ENCODE measurements at regions of chr12 and their contacts with region 1.

Region 1: GRCh38 chr12:7806863-7807487 is 17.8 kb downstream of the NANOG start:
- DNase-seq: peak; percentile 61
- ATAC-seq: peak; percentile 97
- H3K4me3 ChIP-seq: no peak overlapping the region
- H3K27ac ChIP-seq: no peak overlapping the region
- H3K4me1 ChIP-seq: no peaks in the 10 kb centered on the region
- H3K27me3 ChIP-seq: no peaks in the 10 kb centered on the region
- CTCF ChIP-seq: peak; percentile 78
- POLR2A ChIP-seq: no peak
- RAD21 ChIP-seq: peak; percentile 67

Region 2: GRCh38 chr12:7219599-7220243 is 587.3 kb before region 1 on chr12:
- CTCF ChIA-PET with region 1: no interaction called
- POLR2A ChIA-PET with region 1: no interaction called
- dilution Hi-C with region 1: no loop called
- in situ Hi-C with region 1: no loop called
- intact Hi-C with region 1: loop called (anchors 2 kb)
- DNase-seq: peak; percentile 73
- ATAC-seq: peak; percentile 82
- H3K4me3 ChIP-seq: no peak overlapping the region
- H3K27ac ChIP-seq: no peak overlapping the region
- H3K4me1 ChIP-seq: no peaks in the 10 kb centered on the region
- H3K27me3 ChIP-seq: peaks cover 9% of the 10 kb centered on the region
- CTCF ChIP-seq: peak; percentile 97
- POLR2A ChIP-seq: 0 out of 2 replicates have a peak, but pooled peaks have one; percentile 44
- RAD21 ChIP-seq: peak; percentile 99

Region 3: GRCh38 chr12:7645394-7646177 is 161.4 kb before region 1 on chr12:
- CTCF ChIA-PET with region 1: interaction called, 3 read pairs
- POLR2A ChIA-PET with region 1: no interaction called
- dilution Hi-C with region 1: no loop called
- in situ Hi-C with region 1: loop called (anchors 10 kb)
- intact Hi-C with region 1: loop called (anchors 1 kb)
- DNase-seq: peak; percentile 31
- ATAC-seq: peak; percentile 60; the same call in 1 of the 2 replicates
- H3K4me3 ChIP-seq: no peak overlapping the region
- H3K27ac ChIP-seq: no peak overlapping the region
- H3K4me1 ChIP-seq: no peaks in the 10 kb centered on the region
- H3K27me3 ChIP-seq: no peaks in the 10 kb centered on the region; the same call in 1 of the 2 replicates
- CTCF ChIP-seq: peak; percentile 73
- POLR2A ChIP-seq: no peak
- RAD21 ChIP-seq: peak; percentile 30

Region 4: GRCh38 chr12:7656121-7656520 is 150.9 kb before region 1 on chr12:
- CTCF ChIA-PET with region 1: no interaction called
- POLR2A ChIA-PET with region 1: no interaction called
- dilution Hi-C with region 1: no loop called
- in situ Hi-C with region 1: loop called (anchors 10 kb)
- intact Hi-C with region 1: no loop called
- DNase-seq: no peak
- ATAC-seq: no peak
- H3K4me3 ChIP-seq: no peak overlapping the region
- H3K27ac ChIP-seq: no peak overlapping the region
- H3K4me1 ChIP-seq: no peaks in the 10 kb centered on the region
- H3K27me3 ChIP-seq: no peaks in the 10 kb centered on the region
- CTCF ChIP-seq: no peak
- POLR2A ChIP-seq: no peak
- RAD21 ChIP-seq: no peak

Region 5: DNA sequence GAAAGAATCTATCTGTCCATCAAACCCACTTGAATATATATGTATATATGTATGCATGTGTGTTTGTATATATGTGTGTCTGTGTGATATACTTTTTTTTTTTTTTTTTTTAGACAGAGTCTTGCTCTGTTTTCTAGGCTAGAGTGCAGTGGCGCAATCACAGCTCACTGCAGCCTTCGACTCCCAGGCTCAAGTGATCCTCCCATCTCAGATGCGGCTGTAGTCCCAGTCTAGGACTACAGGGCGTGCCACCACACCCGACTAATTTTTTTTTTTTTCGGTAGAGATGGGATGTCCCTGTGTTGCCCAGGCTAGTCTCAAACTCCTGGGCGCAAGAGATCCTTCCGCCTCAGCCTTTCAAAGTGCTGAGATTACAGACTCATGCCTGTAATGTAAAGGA is 128.2 kb before region 1 on chr12:
- CTCF ChIA-PET with region 1: interaction called, 9 read pairs
- POLR2A ChIA-PET with region 1: no interaction called
- dilution Hi-C with region 1: no loop called
- in situ Hi-C with region 1: no loop called
- intact Hi-C with region 1: loop called (anchors 1 kb)
- DNase-seq: no peak
- ATAC-seq: no peak
- H3K4me3 ChIP-seq: no peak overlapping the region
- H3K27ac ChIP-seq: no peak overlapping the region
- H3K4me1 ChIP-seq: no peaks in the 10 kb centered on the region
- H3K27me3 ChIP-seq: no peaks in the 10 kb centered on the region
- CTCF ChIP-seq: no peak
- POLR2A ChIP-seq: no peak
- RAD21 ChIP-seq: no peak

Measured in IMR-90 (cell line).